PC-3 (cell line): ENCODE measurements at regions of chr3 and their contacts with region 1.

Region 1: GRCh38 chr3:44198284-44199269 is 43.1 kb upstream of the TOPAZ1 start:
- DNase-seq: peak; percentile 91
- ATAC-seq: peak; percentile 94
- H3K4me3 ChIP-seq: no peak overlapping the region
- H3K27ac ChIP-seq: no peak overlapping the region
- H3K4me1 ChIP-seq: peaks cover 7% of the 10 kb centered on the region; the same call in 1 of the 2 replicates
- H3K27me3 ChIP-seq: no peaks in the 10 kb centered on the region
- CTCF ChIP-seq: peak; percentile 90

Region 2: GRCh38 chr3:43540624-43541023 is 658.0 kb before region 1 on chr3:
- CTCF ChIA-PET with region 1: no interaction called
- POLR2A ChIA-PET with region 1: no interaction called
- intact Hi-C with region 1: loop called (anchors 1 kb)
- DNase-seq: no peak
- ATAC-seq: no peak
- H3K4me3 ChIP-seq: no peak overlapping the region
- H3K27ac ChIP-seq: no peak overlapping the region
- H3K4me1 ChIP-seq: no peaks in the 10 kb centered on the region
- H3K27me3 ChIP-seq: no peaks in the 10 kb centered on the region
- CTCF ChIP-seq: no peak

Region 3: GRCh38 chr3:43769471-43770425 is 428.8 kb before region 1 on chr3:
- CTCF ChIA-PET with region 1: no interaction called
- POLR2A ChIA-PET with region 1: no interaction called
- intact Hi-C with region 1: loop called (anchors 1 kb)
- DNase-seq: peak; percentile 99
- ATAC-seq: peak; percentile 96
- H3K4me3 ChIP-seq: peak overlapping the region; percentile 41
- H3K27ac ChIP-seq: peak overlapping the region; percentile 5; the same call in 1 of the 2 replicates
- H3K4me1 ChIP-seq: peaks cover 63% of the 10 kb centered on the region
- H3K27me3 ChIP-seq: no peaks in the 10 kb centered on the region
- CTCF ChIP-seq: peak; percentile 93

Region 4: DNA sequence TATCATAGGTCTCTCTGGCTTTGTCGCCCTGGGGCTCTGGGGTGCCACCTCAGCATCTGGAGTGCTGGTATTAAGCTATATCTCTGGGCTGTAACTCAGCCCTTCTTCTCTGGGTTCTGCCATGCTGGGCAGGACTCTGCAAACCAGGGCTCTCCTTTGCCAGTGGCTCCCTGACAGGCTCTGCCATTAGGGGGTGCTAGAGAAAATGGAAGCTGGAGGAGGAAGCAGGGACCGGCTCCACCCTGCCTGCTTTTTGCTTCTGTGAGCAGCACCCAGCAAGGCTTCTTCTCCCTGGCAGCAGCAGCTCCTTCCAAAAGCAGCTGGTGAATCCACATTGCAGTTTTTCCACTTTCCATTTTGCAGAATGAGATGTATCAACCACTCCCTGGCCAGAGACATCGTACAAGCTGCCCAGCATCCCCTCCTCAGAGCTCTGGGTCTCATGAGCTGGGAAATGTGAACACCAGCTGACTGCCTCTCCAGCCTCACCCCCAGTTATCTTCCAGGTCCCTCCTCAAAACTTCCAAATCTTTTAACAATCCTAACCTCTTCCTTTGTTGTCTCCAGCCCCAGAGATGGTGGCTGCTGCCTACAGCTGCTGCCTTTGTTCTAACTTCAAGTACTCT is 342.8 kb before region 1 on chr3:
- CTCF ChIA-PET with region 1: interaction called, 4 read pairs
- POLR2A ChIA-PET with region 1: no interaction called
- intact Hi-C with region 1: loop called (anchors 1 kb)
- DNase-seq: peak; percentile 82
- ATAC-seq: peak; percentile 73
- H3K4me3 ChIP-seq: no peak overlapping the region
- H3K27ac ChIP-seq: no peak overlapping the region
- H3K4me1 ChIP-seq: peaks cover 36% of the 10 kb centered on the region
- H3K27me3 ChIP-seq: no peaks in the 10 kb centered on the region
- CTCF ChIP-seq: peak; percentile 85

Region 5: DNA sequence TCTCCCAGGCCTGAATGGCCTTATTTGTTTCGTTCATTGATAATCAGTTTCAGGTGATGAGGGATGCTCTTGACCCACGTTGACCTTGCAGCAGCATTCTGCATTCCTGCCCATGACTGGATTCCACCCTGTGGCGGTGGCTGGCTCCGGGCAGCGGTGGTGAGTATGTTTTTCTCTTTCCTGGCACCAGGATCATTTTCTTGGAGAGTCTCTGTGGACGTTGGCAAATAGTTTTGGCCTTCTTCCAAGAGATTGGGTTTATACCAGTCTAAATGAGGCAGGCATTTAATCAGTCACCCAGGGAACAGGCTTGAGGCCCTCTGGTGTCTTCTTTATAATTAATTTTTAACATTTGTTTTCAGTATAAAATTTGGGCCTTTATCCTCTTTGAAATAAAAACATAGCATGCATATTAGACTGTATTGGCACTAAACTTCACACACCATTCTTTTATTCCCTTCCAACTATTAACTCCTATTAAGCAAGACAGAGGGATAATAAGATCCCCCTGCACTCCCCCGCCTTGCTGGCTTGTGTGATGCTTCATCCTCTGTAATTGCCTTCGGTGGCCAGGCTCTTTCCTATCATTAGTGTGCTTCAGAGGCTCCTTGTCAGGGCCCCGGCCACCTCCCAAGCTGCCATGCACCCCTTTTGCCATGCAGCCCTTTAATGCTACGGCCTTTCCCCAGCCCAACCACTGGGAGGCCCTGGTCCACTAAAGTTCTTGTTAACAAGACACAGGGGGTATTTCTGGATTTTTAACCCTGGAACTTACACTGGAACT is 133.1 kb before region 1 on chr3:
- CTCF ChIA-PET with region 1: no interaction called
- POLR2A ChIA-PET with region 1: no interaction called
- intact Hi-C with region 1: loop called (anchors 5 kb)
- DNase-seq: peak; percentile 89
- ATAC-seq: peak; percentile 44
- H3K4me3 ChIP-seq: no peak overlapping the region
- H3K27ac ChIP-seq: no peak overlapping the region
- H3K4me1 ChIP-seq: peaks cover 28% of the 10 kb centered on the region
- H3K27me3 ChIP-seq: no peaks in the 10 kb centered on the region
- CTCF ChIP-seq: peak; percentile 27

Region 6: DNA sequence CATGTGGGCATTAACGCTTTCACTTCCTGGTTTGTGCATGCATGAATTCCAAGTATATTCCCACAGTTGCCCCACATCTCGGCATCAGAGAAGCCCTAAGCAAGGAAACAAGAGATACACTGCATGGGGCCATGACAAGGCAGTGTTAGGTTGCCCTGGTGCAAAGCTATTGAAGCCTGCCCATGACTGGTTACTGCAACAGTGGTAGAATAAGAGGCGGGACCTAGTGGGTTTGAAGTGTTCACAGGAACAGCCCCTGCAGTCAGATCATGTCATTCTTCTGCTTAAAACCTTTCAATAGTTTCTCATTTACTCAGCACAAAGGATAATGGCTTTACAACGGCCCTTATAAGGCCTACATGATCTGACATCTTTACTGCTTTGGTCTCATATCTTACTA is 37.8 kb before region 1 on chr3:
- CTCF ChIA-PET with region 1: no interaction called
- POLR2A ChIA-PET with region 1: no interaction called
- intact Hi-C with region 1: no loop called
- DNase-seq: no peak
- ATAC-seq: no peak
- H3K4me3 ChIP-seq: no peak overlapping the region
- H3K27ac ChIP-seq: no peak overlapping the region
- H3K4me1 ChIP-seq: no peaks in the 10 kb centered on the region
- H3K27me3 ChIP-seq: peaks cover 18% of the 10 kb centered on the region; the same call in 1 of the 2 replicates
- CTCF ChIP-seq: no peak